ENCODE measurements at regions of chr20 and their contacts with region 1.

Region 1: GRCh38 chr20:51639206-51639832 is 96.8 kb upstream of the NFATC2 start:
- DNase-seq: peak; percentile 67 to 79 (median 72)
- H3K4me3 ChIP-seq: no peak overlapping the region
- H3K27ac ChIP-seq: no peak overlapping the region
- H3K4me1 ChIP-seq: peaks cover 0 to 19% (median 14%) of the 10 kb centered on the region in 4 experiments
- H3K27me3 ChIP-seq: no peaks in the 10 kb centered on the region

Region 2: GRCh38 chr20:51412991-51413481 is 226.3 kb before region 1 on chr20:
- CTCF ChIA-PET with region 1: no interaction called
- POLR2A ChIA-PET with region 1: no interaction called
- DNase-seq: no peak
- H3K4me3 ChIP-seq: no peak overlapping the region
- H3K27ac ChIP-seq: no peak overlapping the region
- H3K4me1 ChIP-seq: peaks cover 0 to 25% (median 15%) of the 10 kb centered on the region in 4 experiments
- H3K27me3 ChIP-seq: no peaks in the 10 kb centered on the region

Region 3: DNA sequence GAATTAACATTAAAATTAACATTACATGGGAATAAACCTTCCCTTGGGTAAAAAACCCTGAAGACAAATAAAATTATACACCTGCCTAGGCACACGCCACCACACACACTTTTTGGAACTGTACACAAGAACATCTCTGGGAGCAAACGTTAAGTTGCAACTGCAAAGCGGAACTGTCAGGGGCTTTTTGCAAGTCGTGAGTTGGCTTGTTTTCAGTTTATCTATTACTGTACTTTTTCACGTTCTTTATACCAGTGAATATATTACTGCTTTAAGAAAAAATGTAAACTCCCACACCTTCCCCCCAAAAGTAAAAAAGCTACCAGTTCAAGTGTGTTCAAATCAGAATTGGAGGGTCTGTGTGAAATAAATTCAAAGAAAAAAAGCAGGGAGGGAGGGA is 31.3 kb before region 1 on chr20:
- CTCF ChIA-PET with region 1: no interaction called
- POLR2A ChIA-PET with region 1: no interaction called
- DNase-seq: no peak
- H3K4me3 ChIP-seq: no peak overlapping the region
- H3K27ac ChIP-seq: no peak overlapping the region
- H3K4me1 ChIP-seq: peaks cover 0 to 4% (median 1%) of the 10 kb centered on the region in 4 experiments
- H3K27me3 ChIP-seq: no peaks in the 10 kb centered on the region

Region 4: GRCh38 chr20:51680065-51680740 is 40.9 kb after region 1 on chr20:
- CTCF ChIA-PET with region 1: no interaction called
- POLR2A ChIA-PET with region 1: no interaction called
- DNase-seq: no peak
- H3K4me3 ChIP-seq: no peak overlapping the region
- H3K27ac ChIP-seq: no peak overlapping the region
- H3K4me1 ChIP-seq: peaks cover 0 to 9% (median 2%) of the 10 kb centered on the region in 4 experiments
- H3K27me3 ChIP-seq: no peaks in the 10 kb centered on the region

Region 5: GRCh38 chr20:51695574-51696303 is 56.4 kb after region 1 on chr20:
- CTCF ChIA-PET with region 1: interaction called, 15 read pairs
- POLR2A ChIA-PET with region 1: no interaction called
- DNase-seq: peak; percentile 80 to 88 (median 81)
- H3K4me3 ChIP-seq: peak overlapping the region in 5 of 7 experiments; percentile 8 to 62 (median 55)
- H3K27ac ChIP-seq: peak overlapping the region; percentile 65 to 81
- H3K4me1 ChIP-seq: peaks cover 9 to 48% (median 26%) of the 10 kb centered on the region in 4 experiments
- H3K27me3 ChIP-seq: no peaks in the 10 kb centered on the region

Region 6: GRCh38 chr20:51727872-51728271 is 88.6 kb after region 1 on chr20:
- CTCF ChIA-PET with region 1: no interaction called
- POLR2A ChIA-PET with region 1: interaction called, 10 read pairs
- DNase-seq: no peak
- H3K4me3 ChIP-seq: no peak overlapping the region
- H3K27ac ChIP-seq: no peak overlapping the region
- H3K4me1 ChIP-seq: peaks cover 0 to 11% (median 9%) of the 10 kb centered on the region in 4 experiments
- H3K27me3 ChIP-seq: no peaks in the 10 kb centered on the region

Region 7: GRCh38 chr20:51800060-51800794 is 160.9 kb after region 1 on chr20:
- CTCF ChIA-PET with region 1: interaction called, 10 read pairs
- POLR2A ChIA-PET with region 1: no interaction called
- DNase-seq: peak; percentile 58 to 66 (median 59)
- H3K4me3 ChIP-seq: peak overlapping the region; percentile 33 to 85 (median 66)
- H3K27ac ChIP-seq: no peak overlapping the region
- H3K4me1 ChIP-seq: peaks cover 5 to 35% (median 29%) of the 10 kb centered on the region in 4 experiments
- H3K27me3 ChIP-seq: peaks cover 0 to 12% (median 7%) of the 10 kb centered on the region in 5 experiments

Region 8: DNA sequence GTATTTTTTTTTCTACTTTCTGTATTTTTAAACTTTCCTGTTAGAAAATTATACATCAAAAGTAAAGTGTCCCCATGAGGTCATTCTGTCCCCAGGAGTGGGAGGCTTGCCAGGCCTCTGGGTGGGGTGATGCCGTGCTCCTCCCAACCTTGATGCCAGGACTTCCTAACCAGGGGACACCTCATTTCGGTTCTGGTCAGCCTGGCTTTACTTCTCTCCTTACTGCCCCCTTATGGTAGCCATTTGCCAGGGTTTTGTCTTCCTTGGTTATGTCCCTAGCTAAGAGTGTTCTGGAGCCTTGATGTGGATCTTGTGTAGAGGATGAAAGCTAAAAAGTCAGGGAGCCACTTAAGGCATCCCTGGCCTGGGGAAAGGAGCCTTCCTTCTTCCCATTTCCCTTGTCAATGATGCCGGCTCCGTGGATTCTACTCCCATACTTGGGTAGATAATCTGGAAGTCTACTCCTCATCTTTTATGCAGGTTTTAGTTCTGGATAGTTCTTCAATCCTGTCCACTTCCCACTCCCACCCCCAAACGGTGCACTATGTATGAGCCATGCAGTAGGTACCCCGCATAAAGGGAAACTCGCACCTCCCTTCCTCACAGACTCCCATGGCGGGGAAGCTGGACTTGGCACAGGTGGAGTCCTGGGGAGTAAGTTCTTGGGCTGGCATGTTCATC is 327.1 kb after region 1 on chr20:
- CTCF ChIA-PET with region 1: interaction called, 13 read pairs
- POLR2A ChIA-PET with region 1: no interaction called
- DNase-seq: peak; percentile 47 to 61 (median 57)
- H3K4me3 ChIP-seq: no peak overlapping the region
- H3K27ac ChIP-seq: no peak overlapping the region
- H3K4me1 ChIP-seq: peaks cover 0 to 2% (median 0%) of the 10 kb centered on the region in 4 experiments
- H3K27me3 ChIP-seq: no peaks in the 10 kb centered on the region

Region 9: DNA sequence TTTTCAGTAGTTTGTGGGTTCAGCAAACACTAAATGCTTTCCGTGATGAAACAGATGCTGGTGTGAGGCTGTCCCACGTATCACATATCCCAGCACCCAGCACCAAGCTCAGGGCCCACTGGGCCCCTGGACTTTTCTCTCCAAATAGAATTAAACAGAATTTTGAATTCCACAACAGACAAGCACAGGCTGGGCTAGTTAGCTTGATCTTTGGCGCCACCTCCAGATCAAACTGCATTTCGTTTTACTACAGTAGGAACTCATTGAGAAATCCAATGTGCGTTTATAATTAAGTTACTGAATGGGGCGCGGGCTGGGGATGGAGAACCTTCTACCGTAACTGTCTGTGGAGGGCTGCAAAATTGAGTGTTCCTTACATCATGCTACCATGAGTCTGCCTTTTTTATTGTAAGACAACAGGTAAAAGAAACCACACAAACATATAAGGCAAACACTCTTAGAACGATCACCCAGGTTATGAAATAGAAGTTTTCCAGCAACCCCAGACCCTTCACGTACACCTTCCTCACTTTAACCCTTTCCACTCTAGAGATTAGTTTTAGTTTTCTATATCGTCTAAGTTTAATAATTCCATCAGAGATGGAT is 444.4 kb after region 1 on chr20:
- CTCF ChIA-PET with region 1: interaction called, 35 read pairs
- POLR2A ChIA-PET with region 1: no interaction called
- DNase-seq: peak; percentile 65 to 84 (median 78)
- H3K4me3 ChIP-seq: no peak overlapping the region
- H3K27ac ChIP-seq: no peak overlapping the region
- H3K4me1 ChIP-seq: no peaks in the 10 kb centered on the region
- H3K27me3 ChIP-seq: no peaks in the 10 kb centered on the region

Measured in common myeloid progenitor, CD34-positive (primary cell).